ENCODE measurements at regions of chr10 and their contacts with region 1.

Region 1: DNA sequence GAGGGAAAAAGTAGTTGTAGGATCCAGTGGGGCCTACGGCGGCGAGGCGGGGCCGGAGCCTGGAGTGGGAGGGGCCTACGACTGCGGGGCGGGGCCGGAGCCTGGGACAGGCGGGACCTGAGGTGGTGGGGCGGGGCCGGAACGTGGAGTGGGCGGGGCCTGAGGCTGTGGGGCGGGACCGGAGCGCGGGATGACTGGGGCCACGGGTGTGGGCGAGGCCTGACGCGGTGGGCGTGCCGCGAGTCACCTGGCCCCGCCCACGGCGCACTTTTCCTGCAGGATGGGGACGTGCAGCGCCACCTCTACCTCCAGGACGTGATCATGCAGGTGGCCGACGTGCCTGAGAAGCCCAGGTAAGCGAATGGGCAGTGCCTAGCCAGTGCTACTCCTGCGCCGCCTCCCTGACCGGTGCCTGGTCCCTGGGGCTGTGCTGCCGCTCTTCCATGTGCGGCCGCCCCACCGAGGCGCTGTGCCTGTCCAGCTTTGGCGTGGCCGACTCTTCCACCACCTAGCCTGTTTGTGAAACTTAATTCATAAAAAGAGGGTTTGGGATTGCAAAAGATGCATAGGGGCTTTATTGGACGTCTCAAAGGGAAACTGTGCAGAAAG is 501 bp downstream of the ZNF511 start:
- DNase-seq: peak; percentile 96
- H3K4me3 Mint-ChIP-seq: peak overlapping the region; percentile 67
- H3K27ac Mint-ChIP-seq: peak overlapping the region; percentile 82
- H3K4me1 Mint-ChIP-seq: peaks cover 25% of the 10 kb centered on the region
- H3K27me3 Mint-ChIP-seq: no peaks in the 10 kb centered on the region

Region 2: DNA sequence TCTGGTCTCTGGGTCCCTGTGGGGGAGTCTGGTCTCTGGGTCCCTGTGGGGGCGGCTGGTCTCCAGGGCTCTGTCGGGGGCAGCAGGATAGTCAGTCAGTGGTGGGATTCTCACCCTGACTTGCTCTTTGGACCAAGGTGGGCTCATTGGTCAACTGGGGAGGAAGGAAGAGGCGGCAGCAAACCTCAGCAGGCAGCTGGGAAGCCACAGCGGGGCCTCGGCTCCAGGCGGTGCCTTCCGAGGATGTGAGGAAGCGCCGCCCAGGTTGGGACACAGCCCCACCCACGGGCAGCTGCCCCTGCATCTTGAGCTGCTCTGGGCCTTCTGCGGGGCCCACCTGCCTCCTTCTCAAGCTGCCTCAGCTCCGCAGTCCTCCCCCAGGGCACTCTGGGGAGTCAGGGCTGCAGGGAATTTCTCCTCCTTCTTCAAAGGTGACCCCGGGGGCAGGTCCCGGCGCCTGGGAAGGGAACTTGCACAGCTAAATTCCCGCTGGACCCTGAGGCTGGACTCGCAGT is 169.6 kb before region 1 on chr10:
- CTCF ChIA-PET with region 1: interaction called, 6 read pairs
- POLR2A ChIA-PET with region 1: no interaction called
- intact Hi-C with region 1: loop called (anchors 5 kb)
- DNase-seq: peak; percentile 8
- H3K4me3 Mint-ChIP-seq: no peak overlapping the region
- H3K27ac Mint-ChIP-seq: no peak overlapping the region
- H3K4me1 Mint-ChIP-seq: peaks cover 3% of the 10 kb centered on the region
- H3K27me3 Mint-ChIP-seq: peaks cover 8% of the 10 kb centered on the region

Region 3: DNA sequence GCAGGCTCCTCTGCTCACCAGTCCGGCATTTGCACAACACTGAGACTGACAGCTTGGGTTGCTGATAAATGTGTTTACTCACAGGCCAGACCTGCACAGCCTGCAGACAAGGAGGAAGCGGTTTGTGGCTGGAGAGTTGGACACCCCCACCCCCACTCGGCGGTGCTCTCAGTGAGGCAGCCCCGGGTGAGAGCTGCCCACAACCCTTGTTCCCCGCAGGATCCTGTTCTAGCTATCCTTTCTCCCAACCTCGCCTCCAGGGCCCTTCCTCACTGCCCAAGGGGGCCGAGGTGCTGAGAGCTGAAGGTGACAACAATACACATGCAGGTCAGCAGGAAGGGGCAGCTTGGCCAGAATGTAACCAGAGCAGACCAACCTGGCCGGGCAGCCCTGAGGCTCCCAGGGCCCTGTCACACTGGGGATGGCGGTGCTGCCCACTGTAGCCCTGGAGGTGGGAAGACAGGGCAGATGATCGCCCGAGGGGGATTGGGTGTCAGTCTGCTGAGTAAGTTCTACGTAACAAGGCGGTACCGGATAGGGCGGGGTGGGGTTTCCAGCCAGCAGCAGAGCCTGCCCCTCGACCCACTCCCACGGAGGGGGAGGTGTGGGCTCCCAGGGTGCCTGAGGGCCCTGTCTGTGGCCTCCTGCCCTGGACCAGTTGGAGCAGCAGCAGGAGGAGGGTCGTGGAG is 30.5 kb before region 1 on chr10:
- CTCF ChIA-PET with region 1: interaction called, 16 read pairs
- POLR2A ChIA-PET with region 1: interaction called, 7 read pairs
- intact Hi-C with region 1: loop called (anchors 1 kb)
- DNase-seq: peak; percentile 83
- H3K4me3 Mint-ChIP-seq: peak overlapping the region; percentile 63
- H3K27ac Mint-ChIP-seq: peak overlapping the region; percentile 85
- H3K4me1 Mint-ChIP-seq: peaks cover 28% of the 10 kb centered on the region
- H3K27me3 Mint-ChIP-seq: no peaks in the 10 kb centered on the region

Region 4: GRCh38 chr10:133378251-133379096 is 69.3 kb after region 1 on chr10:
- CTCF ChIA-PET with region 1: no interaction called
- POLR2A ChIA-PET with region 1: no interaction called
- intact Hi-C with region 1: loop called (anchors 5 kb)
- DNase-seq: peak; percentile 71
- H3K4me3 Mint-ChIP-seq: peak overlapping the region; percentile 73
- H3K27ac Mint-ChIP-seq: no peak overlapping the region
- H3K4me1 Mint-ChIP-seq: peaks cover 2% of the 10 kb centered on the region
- H3K27me3 Mint-ChIP-seq: no peaks in the 10 kb centered on the region

Region 5: DNA sequence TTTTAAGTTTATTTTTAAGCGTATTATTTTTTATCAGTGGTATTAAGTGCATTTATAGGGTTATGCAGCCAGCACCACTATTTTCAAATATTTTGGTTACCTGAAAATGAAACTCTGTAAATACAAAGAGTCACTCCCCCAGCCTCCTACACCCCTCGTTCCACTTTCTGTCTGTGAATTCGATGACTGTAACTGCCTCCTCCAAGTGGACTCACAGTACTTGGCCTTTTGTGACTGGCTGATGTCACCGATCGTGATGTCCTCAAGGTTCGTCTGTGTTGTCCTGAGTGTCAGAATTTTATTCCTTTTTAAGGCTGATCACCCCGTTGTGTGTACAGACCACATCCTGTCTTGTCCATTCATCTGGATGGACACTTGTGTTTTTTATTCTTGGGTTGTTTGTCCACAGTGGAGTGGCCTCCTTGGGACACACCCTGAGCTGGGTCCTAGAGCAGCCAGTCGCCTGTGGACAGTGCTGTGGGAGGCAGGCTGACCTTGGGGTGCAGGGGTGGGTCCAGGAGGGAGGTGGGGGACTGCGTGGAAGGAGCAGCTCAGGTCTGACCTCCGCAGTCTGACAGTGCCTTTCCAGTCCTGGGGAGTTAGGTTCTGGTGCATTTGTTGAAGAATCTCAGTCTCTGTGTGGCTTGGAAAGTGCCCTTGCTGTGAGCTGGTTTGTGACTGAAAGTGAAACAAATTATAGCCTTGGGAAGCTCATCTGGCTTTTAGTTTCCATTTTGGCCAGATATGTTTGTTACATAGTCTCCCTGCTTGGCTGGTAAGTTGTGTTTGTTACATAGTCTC is 91.6 kb after region 1 on chr10:
- CTCF ChIA-PET with region 1: no interaction called
- POLR2A ChIA-PET with region 1: no interaction called
- intact Hi-C with region 1: no loop called
- DNase-seq: no peak
- H3K4me3 Mint-ChIP-seq: no peak overlapping the region
- H3K27ac Mint-ChIP-seq: peak overlapping the region; percentile 46
- H3K4me1 Mint-ChIP-seq: peaks cover 48% of the 10 kb centered on the region
- H3K27me3 Mint-ChIP-seq: no peaks in the 10 kb centered on the region

Region 6: DNA sequence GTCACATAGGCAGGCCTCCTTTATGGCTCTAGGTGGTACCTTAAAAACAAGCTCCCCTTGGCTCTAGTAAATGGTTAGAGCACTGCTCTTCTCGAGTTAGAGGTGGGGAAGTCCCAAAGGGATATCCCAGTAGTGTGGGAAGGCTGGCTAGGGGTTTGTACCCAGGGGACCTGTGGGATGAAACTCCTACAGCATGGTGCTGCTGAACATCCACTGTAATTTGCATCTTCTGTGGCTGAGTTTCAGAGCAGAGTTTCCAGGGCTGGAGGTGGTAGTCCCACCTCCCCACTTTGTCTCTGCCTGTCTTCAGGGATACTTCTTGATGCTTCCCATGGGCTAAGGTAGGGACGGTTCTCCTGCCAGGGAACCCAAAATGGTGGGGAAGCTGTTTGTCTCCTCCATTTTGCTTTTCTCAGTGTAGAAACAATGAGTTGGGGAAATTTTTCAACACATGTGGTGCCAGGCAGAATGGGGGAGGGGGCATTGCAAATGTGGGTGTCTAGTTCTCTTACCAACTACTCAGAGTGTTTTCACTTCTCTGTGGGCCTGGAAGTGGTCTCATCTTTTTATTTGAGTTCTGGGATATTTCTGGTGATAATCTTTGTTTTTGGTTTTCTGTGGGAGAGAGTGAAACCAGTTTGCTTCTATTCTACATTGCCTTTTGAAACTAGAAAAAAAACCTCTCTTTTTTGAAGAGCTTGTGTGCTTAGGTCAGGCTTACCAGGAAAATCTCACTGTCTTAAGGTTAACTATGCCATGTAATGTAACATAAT is 180.8 kb after region 1 on chr10:
- CTCF ChIA-PET with region 1: no interaction called
- POLR2A ChIA-PET with region 1: no interaction called
- intact Hi-C with region 1: no loop called
- DNase-seq: peak; percentile 29
- H3K4me3 Mint-ChIP-seq: no peak overlapping the region
- H3K27ac Mint-ChIP-seq: no peak overlapping the region
- H3K4me1 Mint-ChIP-seq: peaks cover 7% of the 10 kb centered on the region
- H3K27me3 Mint-ChIP-seq: no peaks in the 10 kb centered on the region

Measured in activated CD4-positive, alpha-beta memory T cell treated with anti-CD3 and anti-CD28 coated beads for 36 hours (primary cell).